Dorsolateral prefrontal cortex (tissue), 120 donors: ENCODE measurements at regions of chr12 and their contacts with region 1.

Region 1: GRCh38 chr12:106136263-106136662 is 2.5 kb downstream of the NUAK1 start:
- DNase-seq: peak; percentile 87 to 96 (median 94)
- H3K4me3 ChIP-seq: peak overlapping the region; percentile 70 to 98 (median 90)
- H3K27ac ChIP-seq: peak overlapping the region; percentile 88 to 100 (median 99)
- H3K27me3 ChIP-seq: no peaks in the 10 kb centered on the region
- CTCF ChIP-seq: peak; percentile 85 to 98 (median 92)

Region 2: DNA sequence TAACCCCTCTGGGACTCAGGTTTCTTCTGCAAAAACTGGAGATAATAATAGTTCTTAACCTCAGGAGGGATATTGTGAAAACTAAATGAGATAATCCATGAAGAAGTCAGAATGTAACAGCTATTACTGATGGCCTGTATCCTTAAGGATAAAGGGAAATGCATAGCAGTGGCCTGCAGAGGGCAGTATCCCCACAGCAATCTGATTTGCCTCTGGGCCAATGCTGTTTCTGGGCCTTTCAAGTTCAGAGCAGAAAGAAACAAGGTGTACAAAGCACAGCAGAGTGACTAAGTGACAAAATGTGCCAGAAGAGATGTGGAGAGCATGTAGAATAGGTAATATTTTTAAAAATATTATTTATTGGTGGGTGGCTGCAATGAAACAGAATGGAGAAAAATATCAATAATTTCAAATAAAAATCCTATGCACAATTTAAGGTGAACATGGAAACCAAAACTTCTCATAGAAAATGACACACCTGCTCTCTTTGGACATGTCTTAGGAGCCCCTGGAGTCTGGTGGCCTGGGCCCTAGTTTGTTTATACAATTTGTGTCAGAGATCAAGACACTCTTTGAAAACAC is 715.5 kb before region 1 on chr12:
- intact Hi-C with region 1: loop called (anchors 2 to 5 kb)
- DNase-seq: peak; percentile 53 to 89 (median 77)
- H3K4me3 ChIP-seq: no peak overlapping the region
- H3K27ac ChIP-seq: no peak overlapping the region
- H3K27me3 ChIP-seq: no peaks in the 10 kb centered on the region
- CTCF ChIP-seq: peak; percentile 79 to 99 (median 93)

Region 3: GRCh38 chr12:105843986-105844760 is 292.1 kb before region 1 on chr12:
- intact Hi-C with region 1: loop called in 1 of 2 experiments (anchors 5 kb)
- DNase-seq: peak in 4 of 10 donors; percentile 28 to 70 (median 66)
- H3K4me3 ChIP-seq: peak overlapping the region in 10 of 59 donors; percentile 0 to 21 (median 4)
- H3K27ac ChIP-seq: peak overlapping the region in 54 of 59 donors; percentile 10 to 84 (median 64)
- H3K27me3 ChIP-seq: no peaks in the 10 kb centered on the region
- CTCF ChIP-seq: no peak

Region 4: DNA sequence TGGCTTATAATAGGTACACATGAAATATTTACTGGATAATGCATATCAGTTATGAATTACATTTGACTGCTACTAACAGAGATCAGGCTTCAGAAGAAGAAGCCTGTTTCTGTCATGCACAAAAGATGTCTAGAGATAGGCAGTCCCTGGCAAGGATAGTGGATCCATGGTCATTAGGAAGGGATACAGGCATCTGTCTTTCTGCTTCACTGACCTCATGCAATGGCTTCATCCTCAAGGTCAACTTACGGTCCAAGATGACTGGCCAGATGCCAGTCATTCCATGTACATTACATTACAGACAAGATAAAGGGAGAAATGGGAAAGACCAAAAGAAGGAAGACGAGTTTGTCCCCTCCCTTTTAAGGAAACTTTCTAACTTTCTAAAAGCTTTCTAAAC is 91.5 kb before region 1 on chr12:
- intact Hi-C with region 1: loop called (anchors 2 kb)
- DNase-seq: no peak
- H3K4me3 ChIP-seq: no peak overlapping the region
- H3K27ac ChIP-seq: peak overlapping the region in 28 of 59 donors; percentile 8 to 97 (median 38)
- H3K27me3 ChIP-seq: no peaks in the 10 kb centered on the region
- CTCF ChIP-seq: no peak

Region 5: DNA sequence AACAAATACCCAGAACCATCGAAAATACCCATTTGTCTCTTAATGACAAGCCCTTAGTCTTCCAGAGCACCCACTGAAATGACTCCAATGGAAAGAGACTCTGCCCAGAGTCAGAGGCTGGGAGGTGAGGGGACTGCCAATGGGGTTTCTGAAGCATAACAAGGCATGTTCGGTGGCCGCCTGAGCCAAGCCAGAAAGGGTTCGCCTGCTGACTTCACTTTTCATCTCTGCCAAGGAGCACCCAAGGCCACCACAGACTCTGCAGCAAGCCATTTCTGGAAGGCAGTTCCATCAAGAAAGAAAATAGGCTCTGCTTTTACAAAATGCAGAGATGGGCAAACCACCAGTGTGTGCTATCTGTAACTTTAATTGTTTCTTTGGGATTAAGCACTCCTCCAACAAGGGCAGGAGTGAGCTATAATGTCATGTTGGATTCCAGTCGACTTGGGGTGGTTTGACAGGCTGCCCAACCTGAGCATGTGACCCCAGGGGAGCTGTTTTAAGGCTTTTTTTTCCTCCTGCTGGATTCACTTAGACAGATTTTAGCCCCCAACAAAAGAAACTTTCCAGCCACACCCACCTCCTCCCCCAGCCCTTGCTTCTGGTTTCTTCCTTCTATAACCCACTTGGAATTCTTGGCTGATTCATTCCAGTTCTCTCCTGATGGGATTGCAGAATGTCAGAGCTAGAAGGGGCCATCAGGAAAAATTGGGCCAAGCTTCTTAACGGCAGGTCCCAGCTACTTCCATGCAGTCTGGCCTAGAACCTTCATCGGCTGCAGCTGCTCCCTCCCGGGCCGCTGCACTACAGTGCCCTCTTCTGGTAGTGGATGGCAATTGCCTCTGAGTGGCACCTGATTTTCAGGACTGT is 87.5 kb after region 1 on chr12:
- intact Hi-C with region 1: loop called (anchors 2 to 5 kb)
- DNase-seq: peak in 6 of 10 donors; percentile 55 to 77 (median 66)
- H3K4me3 ChIP-seq: no peak overlapping the region
- H3K27ac ChIP-seq: no peak overlapping the region
- H3K27me3 ChIP-seq: no peaks in the 10 kb centered on the region
- CTCF ChIP-seq: peak; percentile 74 to 94 (median 89)

Region 6: GRCh38 chr12:106345739-106346138 is 209.5 kb after region 1 on chr12:
- intact Hi-C with region 1: loop called (anchors 10 kb)
- DNase-seq: peak in 2 of 10 donors; percentile 33 to 50
- H3K4me3 ChIP-seq: no peak overlapping the region
- H3K27ac ChIP-seq: peak overlapping the region in 12 of 59 donors; percentile 1 to 62 (median 24)
- H3K27me3 ChIP-seq: no peaks in the 10 kb centered on the region
- CTCF ChIP-seq: peak in 54 of 56 donors; percentile 22 to 77 (median 53)